Activated T-helper 2 cell treated with anti-CD3 and anti-CD28 coated beads, Interferon-gamma antibody, Interleukin-2, Interleukin-4, amounts not matched to agents 10 μg/mL and 5 μg/mL and 100 μg/mL, durations not matched to agents 14 hours and 24 hours and 36 hours (primary cell): ENCODE measurements at regions of chr12 and their contacts with region 1.

Region 1: DNA sequence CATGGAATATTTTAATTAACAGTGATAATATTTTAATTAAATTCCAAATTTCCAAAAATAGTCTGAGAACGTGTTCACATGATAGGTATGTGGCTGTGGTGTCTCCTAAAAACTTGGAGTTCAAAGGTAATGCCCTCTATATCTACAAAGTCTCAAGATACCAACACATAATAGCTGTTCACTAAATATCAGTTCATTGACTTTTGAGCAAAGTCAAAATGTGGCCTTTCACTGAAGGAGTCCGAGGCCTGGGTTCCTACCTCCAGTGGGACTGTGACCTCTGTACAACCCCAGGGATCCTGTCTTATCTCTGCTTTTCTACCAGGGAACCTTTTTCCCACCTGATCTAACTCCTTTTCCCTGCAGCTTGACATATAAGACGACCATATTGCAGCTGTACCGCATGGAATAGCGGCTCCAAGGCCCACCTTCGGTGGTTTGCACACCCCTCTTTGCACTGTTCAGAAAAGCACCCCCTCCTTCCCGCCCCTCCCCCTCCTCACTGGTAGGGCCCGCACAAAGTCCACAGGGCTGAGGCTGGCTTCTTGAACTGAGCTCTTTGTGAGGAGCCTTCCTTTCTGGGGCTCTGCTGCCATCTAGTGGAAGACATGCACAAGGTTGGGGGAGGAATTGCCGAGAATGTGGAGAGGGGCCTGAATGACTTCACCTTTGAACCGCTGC is 3.1 kb downstream of the CCND2 start:
- DNase-seq: peak; percentile 79
- H3K4me3 Mint-ChIP-seq: peak overlapping the region; percentile 95
- H3K27ac Mint-ChIP-seq: peak overlapping the region; percentile 89
- H3K4me1 Mint-ChIP-seq: peaks cover 45% of the 10 kb centered on the region
- H3K27me3 Mint-ChIP-seq: no peaks in the 10 kb centered on the region

Region 2: GRCh38 chr12:3885277-3886094 is 391.2 kb before region 1 on chr12:
- intact Hi-C with region 1: loop called (anchors 1 kb)
- DNase-seq: no peak
- H3K4me3 Mint-ChIP-seq: no peak overlapping the region
- H3K27ac Mint-ChIP-seq: no peak overlapping the region
- H3K4me1 Mint-ChIP-seq: peaks cover 14% of the 10 kb centered on the region
- H3K27me3 Mint-ChIP-seq: peaks cover 8% of the 10 kb centered on the region

Region 3: GRCh38 chr12:3998968-3999826 is 277.5 kb before region 1 on chr12:
- intact Hi-C with region 1: loop called (anchors 1 kb)
- DNase-seq: no peak
- H3K4me3 Mint-ChIP-seq: no peak overlapping the region
- H3K27ac Mint-ChIP-seq: no peak overlapping the region
- H3K4me1 Mint-ChIP-seq: peaks cover 9% of the 10 kb centered on the region
- H3K27me3 Mint-ChIP-seq: peaks cover 5% of the 10 kb centered on the region

Region 4: DNA sequence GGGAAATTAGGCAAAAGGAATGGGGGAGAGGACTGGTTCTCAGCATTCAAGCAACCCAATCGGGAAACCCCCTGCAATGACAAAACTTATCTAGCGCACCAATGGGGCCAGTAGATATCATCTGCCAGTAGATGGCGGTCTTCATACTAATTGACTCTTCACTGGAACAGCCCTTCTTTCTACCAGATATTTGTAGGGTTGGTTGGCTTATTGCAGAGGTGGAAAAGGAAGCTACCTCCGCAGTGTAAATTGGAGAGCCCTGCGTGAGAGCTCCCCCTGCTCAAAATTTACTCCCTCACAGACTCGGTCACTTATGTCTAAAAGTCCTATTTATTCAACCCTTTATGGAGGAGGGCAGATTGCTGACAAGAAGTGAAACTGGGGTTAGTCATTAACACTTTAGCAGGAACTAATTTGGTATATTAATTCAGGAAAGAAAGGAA is 169.2 kb before region 1 on chr12:
- intact Hi-C with region 1: loop called (anchors 1 kb)
- DNase-seq: peak; percentile 75
- H3K4me3 Mint-ChIP-seq: peak overlapping the region; percentile 10
- H3K27ac Mint-ChIP-seq: peak overlapping the region; percentile 73
- H3K4me1 Mint-ChIP-seq: peaks cover 53% of the 10 kb centered on the region
- H3K27me3 Mint-ChIP-seq: peaks cover 4% of the 10 kb centered on the region

Region 5: GRCh38 chr12:4143896-4144295 is 132.8 kb before region 1 on chr12:
- intact Hi-C with region 1: loop called (anchors 1 kb)
- DNase-seq: no peak
- H3K4me3 Mint-ChIP-seq: no peak overlapping the region
- H3K27ac Mint-ChIP-seq: peak overlapping the region; percentile 64
- H3K4me1 Mint-ChIP-seq: peaks cover 95% of the 10 kb centered on the region
- H3K27me3 Mint-ChIP-seq: no peaks in the 10 kb centered on the region

Region 6: GRCh38 chr12:4178424-4179170 is 98.1 kb before region 1 on chr12:
- intact Hi-C with region 1: loop called (anchors 1 kb)
- DNase-seq: no peak
- H3K4me3 Mint-ChIP-seq: peak overlapping the region; percentile 11
- H3K27ac Mint-ChIP-seq: peak overlapping the region; percentile 93
- H3K4me1 Mint-ChIP-seq: peaks cover 23% of the 10 kb centered on the region
- H3K27me3 Mint-ChIP-seq: no peaks in the 10 kb centered on the region